ENCODE measurements at regions of chr6 and their contacts with region 1.

Region 1: DNA sequence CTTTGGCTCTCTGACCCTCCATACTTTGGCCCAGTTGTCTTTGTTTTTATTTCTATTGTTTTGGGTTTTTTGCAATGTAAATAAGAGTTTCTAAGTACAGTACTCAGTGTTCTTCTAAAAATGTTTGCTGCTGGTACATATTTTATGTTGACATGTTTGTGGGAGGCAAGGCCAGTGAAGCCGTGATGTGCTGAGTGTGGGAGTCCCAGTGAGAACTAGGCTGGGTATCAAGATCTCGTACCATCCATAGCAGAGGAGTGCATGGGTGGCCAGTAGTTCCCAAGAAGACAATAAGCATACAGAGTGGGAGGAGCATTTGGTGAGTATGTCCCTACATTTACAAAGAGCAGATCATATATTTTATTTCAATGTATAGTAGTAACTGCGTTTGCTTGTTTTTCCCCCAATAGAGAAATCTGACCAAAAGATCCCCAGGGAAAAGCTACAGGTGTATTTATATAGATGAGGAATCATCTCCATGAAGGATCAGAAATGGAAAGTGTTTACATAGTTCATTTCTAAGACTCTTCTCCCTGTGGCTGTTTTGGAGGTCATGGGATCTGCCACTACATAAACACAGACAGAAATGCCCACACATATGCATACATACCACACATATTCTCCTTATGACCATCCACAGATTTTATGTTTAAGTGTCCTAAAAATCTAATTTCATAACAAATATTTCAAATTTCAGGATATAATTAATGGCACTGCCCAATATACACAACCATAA is 285.9 kb downstream of the ALDH8A1 start:
- DNase-seq: peak; percentile 82
- ATAC-seq: peak; percentile 94
- H3K4me3 ChIP-seq: no peak overlapping the region
- H3K27ac ChIP-seq: peak overlapping the region; percentile 30; the same call in 1 of the 2 replicates
- H3K4me1 ChIP-seq: peaks cover 11% of the 10 kb centered on the region
- H3K27me3 ChIP-seq: no peaks in the 10 kb centered on the region
- CTCF ChIP-seq: no peak
- POLR2A ChIP-seq: no peak
- RAD21 ChIP-seq: no peak

Region 2: GRCh38 chr6:134741200-134741536 is 77.2 kb after region 1 on chr6:
- CTCF ChIA-PET with region 1: no interaction called
- POLR2A ChIA-PET with region 1: no interaction called
- dilution Hi-C with region 1: no loop called
- in situ Hi-C with region 1: no loop called
- intact Hi-C with region 1: loop called (anchors 5 kb)
- DNase-seq: no peak
- ATAC-seq: no peak
- H3K4me3 ChIP-seq: no peak overlapping the region
- H3K27ac ChIP-seq: no peak overlapping the region
- H3K4me1 ChIP-seq: peaks cover 4% of the 10 kb centered on the region; the same call in 1 of the 2 replicates
- H3K27me3 ChIP-seq: no peaks in the 10 kb centered on the region
- CTCF ChIP-seq: no peak
- POLR2A ChIP-seq: no peak
- RAD21 ChIP-seq: no peak

Measured in IMR-90 (cell line).